ENCODE measurements at regions of chr4 and their contacts with region 1.

Region 1: GRCh38 chr4:163494360-163495162 is at the start of gene TMA16:
- DNase-seq: peak; percentile 87
- H3K4me3 ChIP-seq: peak within 1 kb of the TSS; percentile 91
- H3K27ac ChIP-seq: peak within 1 kb of the TSS; percentile 95
- H3K27me3 ChIP-seq: no peaks in the 10 kb centered on the region
- CTCF ChIP-seq: no peak
- polyA plus RNA-seq, gene TMA16: 15.3 and 21.1 TPM in 2 replicates

Region 2: DNA sequence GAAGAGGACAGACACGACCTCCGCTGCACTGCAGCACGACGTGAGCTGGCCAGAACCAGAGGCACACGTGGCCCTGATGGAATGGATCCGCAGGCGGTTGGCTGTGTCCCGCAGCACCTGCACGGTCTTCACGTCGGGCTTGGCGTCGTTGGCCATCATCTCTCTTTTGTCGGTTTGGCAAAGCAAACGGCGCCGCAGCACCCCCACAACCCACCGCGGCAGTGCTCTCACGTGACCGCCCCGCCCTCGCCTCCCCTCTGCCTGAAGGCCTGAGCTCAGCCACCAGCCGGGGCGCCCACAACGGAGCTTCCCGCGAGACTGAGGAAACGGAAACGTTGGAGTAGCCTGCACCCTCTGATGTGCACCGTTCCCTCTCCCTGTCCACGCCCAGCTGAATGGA is 21.0 kb before region 1 on chr4 and contains the start of gene TKTL2:
- CTCF ChIA-PET with region 1: no interaction called
- POLR2A ChIA-PET with region 1: no interaction called
- DNase-seq: no peak
- H3K4me3 ChIP-seq: no peak within 1 kb of the TSS
- H3K27ac ChIP-seq: no peak within 1 kb of the TSS
- H3K27me3 ChIP-seq: peaks cover 2% of the 10 kb centered on the region
- CTCF ChIP-seq: no peak
- polyA plus RNA-seq, gene TKTL2: not detected in 2 replicates

Region 3: DNA sequence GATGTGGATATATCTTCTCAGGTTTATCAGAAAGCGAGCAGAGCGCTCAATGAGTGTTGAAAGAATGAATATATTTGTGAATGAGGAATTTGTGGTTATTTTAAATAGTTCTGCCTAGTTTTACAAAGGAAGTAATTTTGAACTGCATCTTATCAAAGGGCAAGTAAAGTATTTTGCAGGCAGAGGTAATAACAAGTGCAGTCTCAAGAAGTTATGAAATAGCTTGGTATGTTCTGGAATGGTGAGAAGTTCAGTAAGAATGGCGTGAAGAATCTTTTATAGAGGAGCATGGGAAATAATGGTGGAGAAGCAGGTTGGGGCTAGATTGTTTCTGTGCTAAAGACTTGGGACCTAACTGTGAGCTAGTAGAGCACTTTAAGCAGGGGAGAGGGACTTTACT is 10.8 kb after region 1 on chr4:
- CTCF ChIA-PET with region 1: no interaction called
- POLR2A ChIA-PET with region 1: interaction called, 15 read pairs
- DNase-seq: no peak
- H3K4me3 ChIP-seq: no peak overlapping the region
- H3K27ac ChIP-seq: no peak overlapping the region
- H3K27me3 ChIP-seq: no peaks in the 10 kb centered on the region
- CTCF ChIP-seq: no peak

Measured in AG04450 (cell line).